ENCODE measurements at regions of chr15 and their contacts with region 1.

Region 1: DNA sequence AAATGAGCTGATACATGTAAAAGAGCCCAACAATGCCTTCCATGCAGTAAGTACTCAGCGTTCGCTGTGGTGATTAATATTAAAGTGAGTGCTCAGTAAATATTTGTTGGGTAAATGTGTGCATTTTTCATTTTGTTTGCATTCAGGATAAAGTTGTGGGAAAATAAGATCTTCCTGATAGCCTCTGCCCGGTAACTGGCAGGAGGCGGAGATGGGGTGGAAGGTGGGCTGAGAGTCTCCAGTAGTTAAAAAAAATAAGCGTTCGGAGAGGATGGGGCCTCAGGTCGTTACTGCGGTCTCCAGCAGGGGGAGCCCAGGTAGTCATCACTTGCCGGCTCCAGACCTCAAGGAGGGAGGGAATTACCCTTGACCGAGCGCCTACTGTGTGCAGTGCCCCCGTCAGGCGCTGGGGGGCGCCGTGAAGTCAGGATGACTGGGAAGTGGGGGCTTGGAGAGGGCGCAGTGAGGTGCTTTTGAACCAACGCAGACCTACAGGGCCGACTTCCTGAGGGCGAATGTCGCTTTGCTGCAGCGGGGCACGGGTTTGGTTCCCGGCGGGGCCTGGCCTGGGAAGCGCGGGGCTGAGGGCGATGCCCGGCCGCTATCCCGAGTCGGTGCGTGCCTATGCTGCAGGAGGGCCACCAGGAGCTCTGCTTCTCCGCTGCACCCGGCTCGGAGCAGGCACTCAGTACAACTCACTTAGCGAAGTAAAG is 80.1 kb downstream of the RHCG start:
- DNase-seq: no peak
- H3K4me3 ChIP-seq: no peak overlapping the region
- H3K27ac ChIP-seq: no peak overlapping the region
- H3K4me1 ChIP-seq: peaks cover 0 to 14% (median 3%) of the 10 kb centered on the region in 3 donors
- H3K27me3 ChIP-seq: peaks cover 16 to 100% (median 37%) of the 10 kb centered on the region in 4 donors
- CTCF ChIP-seq: peak; percentile 59 to 83 (median 62)
- POLR2A ChIP-seq: no peak

Region 2: DNA sequence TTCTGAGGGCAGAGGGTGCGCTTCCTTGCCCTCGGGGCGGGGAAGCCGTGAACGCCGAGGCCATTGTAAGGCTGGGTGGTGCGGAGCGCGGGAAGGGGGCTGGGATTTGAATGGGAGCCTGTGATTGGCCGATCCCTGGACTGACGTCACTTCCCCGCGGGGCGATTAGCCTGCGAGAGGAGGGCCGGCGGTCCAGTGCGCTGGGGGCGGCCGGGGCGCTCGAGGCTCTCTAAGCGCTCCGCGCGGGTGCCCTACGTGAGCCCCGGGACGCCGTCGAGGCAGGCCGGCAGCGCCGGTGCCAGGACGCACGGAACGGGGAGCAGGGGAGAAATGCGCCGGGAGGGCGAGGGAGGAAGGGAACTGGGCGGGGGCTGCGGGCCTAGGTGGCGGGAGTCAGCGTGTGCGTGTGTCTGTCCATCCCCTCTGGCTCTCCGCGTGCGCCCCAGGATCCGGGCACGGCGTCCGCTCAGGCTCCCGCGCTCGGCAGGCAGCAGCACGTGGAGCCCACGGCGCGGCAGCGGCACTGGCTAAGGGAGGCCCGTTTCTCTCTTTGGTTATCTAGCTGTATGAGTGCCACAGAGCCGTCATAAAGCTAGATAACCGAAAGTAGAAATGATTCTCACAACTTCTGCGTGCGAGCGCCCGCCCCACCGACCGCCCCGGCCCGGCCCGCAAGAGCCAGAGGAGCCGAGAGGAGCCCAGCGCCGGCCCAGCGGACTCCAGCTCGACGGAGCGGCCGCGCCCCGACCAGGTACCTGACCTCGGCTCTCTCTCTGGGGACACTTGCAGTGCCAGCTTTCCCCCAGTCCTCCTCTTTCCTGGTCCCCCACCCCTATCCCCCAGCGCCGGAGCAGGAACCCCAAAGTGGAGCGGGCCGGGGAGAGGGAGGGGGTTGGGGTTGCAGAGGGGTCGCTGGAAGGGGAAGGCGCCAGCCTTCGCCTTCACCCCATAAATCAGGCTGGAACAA is 48.5 kb before region 1 on chr15:
- intact Hi-C with region 1: loop called (anchors 5 kb)
- DNase-seq: no peak
- H3K4me3 ChIP-seq: peak overlapping the region in 2 of 4 donors; percentile 6 to 48
- H3K27ac ChIP-seq: no peak overlapping the region
- H3K4me1 ChIP-seq: peaks cover 6 to 60% (median 19%) of the 10 kb centered on the region in 3 donors
- H3K27me3 ChIP-seq: peaks cover 32 to 100% (median 84%) of the 10 kb centered on the region in 4 donors
- CTCF ChIP-seq: no peak
- POLR2A ChIP-seq: no peak

Measured in esophagus squamous epithelium (tissue), 5 donors.